ENCODE measurements at regions of chr1 and their contacts with region 1.

Region 1: DNA sequence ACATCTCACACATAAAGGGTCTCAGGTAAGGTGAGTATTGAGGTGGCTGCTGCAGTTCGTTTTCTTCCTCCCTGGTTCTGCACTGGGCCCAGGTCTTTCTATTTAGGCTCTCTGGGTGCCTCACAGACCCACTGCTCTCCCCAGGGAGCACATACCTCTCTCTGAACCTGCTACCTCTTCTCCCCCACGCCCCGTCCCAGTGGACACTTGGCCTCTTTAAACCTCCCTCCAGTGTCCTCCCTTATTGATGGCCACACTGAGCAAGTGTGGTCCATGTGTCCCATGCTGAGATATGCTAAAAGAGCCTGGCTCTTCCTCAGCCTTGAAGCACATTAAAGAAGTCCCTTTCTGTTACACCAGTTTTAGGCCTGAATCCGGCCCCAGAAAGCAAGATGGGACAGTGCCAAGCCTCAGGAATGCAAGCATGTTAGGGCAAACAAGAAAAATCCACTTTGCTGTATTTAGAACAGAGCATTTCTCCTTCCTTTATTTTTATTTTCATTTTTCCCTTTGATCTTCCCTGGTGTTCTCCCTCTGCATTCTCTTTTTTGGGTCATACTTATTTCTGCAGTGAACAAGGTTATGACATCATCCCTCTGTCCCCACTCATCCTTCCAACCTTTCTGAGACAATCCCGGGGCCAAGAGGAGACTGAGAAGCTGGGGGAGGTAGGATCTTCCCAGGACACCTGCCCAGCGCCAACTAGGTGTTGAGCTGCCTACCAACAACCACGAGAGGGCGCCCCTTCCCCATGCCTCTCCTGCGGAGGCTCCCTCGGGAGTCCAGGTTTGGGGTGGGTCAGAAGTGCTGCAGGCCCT is 5.0 kb upstream of the CHI3L2 start:
- DNase-seq: peak; percentile 68
- H3K4me3 ChIP-seq: no peak overlapping the region
- H3K27ac ChIP-seq: no peak overlapping the region
- H3K4me1 ChIP-seq: no peaks in the 10 kb centered on the region
- H3K27me3 ChIP-seq: no peaks in the 10 kb centered on the region
- CTCF ChIP-seq: peak; percentile 89 to 92 (median 90)
- POLR2A ChIP-seq: no peak

Region 2: DNA sequence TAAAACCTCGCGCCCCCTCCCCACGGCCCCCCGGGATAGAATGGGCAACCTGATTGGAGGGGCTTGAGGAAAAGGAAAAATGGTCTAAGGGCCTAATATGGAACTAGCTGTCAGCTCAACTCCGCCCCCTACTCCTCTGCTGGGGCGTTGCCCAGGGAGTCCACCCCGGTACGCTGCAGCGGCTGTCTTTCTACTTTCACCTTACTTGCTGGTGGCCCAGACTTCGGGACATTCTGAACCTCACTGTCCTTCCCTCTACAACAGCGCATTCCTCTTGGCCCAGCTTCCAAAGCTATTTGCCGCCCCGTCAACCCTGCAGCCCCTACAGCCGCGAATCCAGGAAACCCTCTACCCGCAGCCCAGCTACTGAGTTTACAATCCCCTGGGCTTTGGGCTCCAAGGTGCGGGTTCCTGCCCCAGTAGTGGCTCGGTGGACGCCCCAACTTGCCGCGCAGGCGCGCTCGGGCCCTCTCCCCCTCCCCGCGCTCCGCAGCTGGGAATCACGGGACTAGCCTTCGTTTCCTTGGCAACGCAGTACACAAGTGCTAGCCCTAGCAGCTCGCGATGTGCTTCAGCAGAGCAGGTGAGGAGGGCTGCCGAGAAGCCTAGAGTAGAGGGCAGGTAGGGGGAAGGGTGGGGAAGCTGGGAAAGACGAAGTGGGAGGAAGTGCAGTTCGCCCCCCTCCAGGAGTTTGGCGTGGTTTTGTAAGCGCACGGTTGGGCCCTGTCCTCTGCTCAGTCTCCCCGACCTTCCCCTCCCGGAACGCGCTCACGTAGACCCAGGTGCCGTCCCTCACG is 123.8 kb after region 1 on chr1:
- intact Hi-C with region 1: loop called (anchors 5 kb)
- DNase-seq: peak; percentile 87
- H3K4me3 ChIP-seq: peak overlapping the region; percentile 51
- H3K27ac ChIP-seq: peak overlapping the region; percentile 86 to 91
- H3K4me1 ChIP-seq: no peaks in the 10 kb centered on the region
- H3K27me3 ChIP-seq: no peaks in the 10 kb centered on the region
- CTCF ChIP-seq: peak in 2 of 4 experiments; percentile 3 to 22
- POLR2A ChIP-seq: peak; percentile 46

Region 3: DNA sequence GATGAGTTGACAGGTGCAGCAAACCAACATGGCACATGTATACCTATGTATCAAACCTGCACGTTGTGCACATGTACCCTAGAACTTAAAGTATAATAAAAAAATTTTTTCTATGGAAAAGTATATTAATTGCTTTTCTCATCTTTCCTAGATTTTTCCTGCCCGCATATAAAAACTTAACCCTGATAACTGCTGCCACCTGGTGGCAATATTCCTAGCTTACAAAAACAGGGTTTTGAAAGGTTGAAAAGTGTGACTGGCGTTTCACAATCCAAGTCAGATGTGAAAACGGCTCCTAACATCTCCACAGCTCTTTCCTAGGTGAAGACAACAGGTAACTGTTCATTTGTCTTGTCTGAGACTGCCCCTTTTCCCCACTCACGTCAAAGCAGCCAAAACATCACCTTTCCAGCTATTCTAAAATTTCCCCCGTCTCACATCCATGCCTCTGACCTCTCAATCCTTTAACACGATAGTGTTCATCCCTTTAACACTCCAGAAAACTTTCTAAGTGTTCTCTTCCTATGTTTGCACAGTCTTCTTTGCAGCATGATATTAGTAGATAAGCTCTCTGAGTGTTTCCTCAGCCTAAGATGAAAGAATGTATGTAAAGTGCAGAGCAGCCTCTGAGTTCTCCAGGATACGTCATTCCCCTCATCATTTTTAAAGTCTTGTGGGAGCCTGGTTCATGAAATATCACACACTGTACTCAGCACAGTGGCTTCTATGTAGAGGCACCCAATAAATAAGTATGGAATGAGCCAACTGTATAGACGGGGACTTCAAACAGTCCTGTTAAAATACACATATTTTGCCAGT is 177.5 kb after region 1 on chr1:
- intact Hi-C with region 1: loop called (anchors 2 kb)
- DNase-seq: peak; percentile 67
- H3K4me3 ChIP-seq: no peak overlapping the region
- H3K27ac ChIP-seq: no peak overlapping the region
- H3K4me1 ChIP-seq: no peaks in the 10 kb centered on the region
- H3K27me3 ChIP-seq: no peaks in the 10 kb centered on the region
- CTCF ChIP-seq: peak; percentile 53 to 87 (median 79)
- POLR2A ChIP-seq: no peak

Region 4: DNA sequence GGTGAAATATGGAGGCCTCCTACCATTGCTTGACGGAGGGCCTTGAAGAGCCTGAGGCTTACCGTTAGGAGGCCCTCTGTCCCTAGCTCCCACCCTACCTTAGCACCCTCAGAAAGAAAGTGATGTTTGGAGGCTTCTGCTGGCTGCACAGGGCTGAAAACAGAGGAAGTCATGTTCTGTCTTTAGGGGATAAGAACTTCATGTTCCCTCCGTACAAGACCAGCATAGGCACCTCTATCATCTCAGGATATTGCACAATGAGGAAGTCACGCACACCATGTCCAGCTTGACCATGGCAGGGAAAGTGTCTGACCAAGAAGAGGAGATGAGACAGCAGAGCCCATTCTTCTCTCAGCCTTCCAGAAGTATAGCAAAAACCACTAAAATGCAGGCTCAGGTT is 267.1 kb after region 1 on chr1:
- intact Hi-C with region 1: no loop called
- DNase-seq: no peak
- H3K4me3 ChIP-seq: no peak overlapping the region
- H3K27ac ChIP-seq: no peak overlapping the region
- H3K4me1 ChIP-seq: no peaks in the 10 kb centered on the region
- H3K27me3 ChIP-seq: no peaks in the 10 kb centered on the region
- CTCF ChIP-seq: no peak
- POLR2A ChIP-seq: no peak